ENCODE measurements at regions of chr10 and their contacts with region 1.

Region 1: DNA sequence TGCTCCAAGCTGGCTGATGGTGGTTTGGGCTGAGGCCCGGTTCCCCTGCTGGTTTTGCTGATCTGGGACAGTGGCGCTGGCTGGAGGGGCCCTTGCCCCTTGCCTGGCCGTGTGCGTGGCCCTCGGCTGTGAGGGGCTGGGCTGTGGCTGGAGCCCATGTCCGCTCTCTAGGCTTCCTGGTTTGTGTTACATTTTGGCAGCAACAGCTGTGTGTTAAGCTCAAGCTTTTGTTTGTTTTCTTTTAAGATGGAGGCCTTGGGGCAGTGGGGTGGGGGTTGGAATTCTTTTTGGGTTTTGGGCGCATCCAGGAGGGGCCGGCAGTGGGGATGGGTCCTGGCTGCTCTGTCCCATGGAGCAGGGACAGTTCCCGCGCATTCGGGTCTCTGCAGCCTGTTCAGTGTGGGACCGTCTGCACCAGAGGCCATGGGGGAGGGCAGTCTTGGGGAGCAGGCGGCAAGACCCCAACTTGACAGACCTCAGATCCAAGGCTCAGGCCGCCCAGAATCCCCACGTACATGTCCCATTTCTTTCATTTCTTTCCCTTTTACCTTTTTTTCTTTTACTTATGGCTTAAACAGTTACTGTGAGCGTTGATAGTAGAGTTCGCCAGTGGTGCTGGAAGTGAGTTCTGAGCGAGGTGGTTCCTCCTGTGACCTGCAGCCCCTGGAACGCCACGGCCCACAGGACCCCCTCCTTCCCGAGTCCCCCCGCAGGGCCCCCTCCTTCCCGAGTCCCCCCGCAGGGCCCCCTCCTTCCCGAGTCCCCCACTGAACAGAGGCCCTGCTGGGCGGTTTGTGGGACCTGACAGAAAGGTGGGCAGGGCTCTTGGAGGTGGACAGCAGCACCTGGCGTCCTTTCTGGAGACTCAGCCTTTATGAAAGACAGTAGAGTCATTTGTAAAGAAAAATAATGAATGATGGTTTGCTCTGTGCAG is 75.3 kb downstream of the INPP5A start:
- DNase-seq: peak; percentile 68

Region 2: DNA sequence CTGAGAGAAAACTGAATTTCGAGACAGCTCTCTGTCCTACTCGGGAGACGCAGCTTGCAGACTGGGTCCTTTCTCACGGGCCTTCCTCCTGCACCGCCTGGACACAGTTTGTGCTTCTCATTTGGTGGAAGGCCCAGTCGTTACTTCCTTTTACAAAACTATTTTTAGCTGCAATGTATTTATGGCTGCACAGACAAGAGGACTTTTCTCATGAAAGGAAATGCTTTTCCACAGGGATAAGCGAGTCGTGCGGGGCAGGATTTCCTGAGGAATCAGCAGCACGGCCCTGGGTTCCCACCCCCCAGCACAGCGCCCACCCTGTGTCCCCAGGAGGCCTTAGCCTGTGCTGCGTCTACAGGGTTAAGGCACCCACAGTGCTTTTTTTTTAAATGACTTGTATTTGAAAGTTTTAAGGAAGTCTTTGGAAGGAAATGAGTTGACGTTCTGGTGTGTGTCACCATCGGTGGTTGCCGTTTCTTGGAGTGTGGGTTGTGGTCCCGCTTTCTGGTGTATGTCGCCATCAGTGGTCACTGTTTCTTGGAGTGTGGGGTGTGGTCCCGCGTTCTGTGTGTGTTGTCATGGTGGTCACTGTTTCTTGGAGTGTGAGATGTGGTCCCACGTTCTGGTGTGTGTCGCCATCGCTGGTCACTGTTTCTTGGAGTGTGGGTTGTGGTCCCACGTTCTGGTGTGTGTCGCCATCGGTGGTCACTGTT is 24.4 kb before region 1 on chr10:
- intact Hi-C with region 1: loop called in 1 of 2 experiments (anchors 1 kb)
- DNase-seq: no peak

Region 3: DNA sequence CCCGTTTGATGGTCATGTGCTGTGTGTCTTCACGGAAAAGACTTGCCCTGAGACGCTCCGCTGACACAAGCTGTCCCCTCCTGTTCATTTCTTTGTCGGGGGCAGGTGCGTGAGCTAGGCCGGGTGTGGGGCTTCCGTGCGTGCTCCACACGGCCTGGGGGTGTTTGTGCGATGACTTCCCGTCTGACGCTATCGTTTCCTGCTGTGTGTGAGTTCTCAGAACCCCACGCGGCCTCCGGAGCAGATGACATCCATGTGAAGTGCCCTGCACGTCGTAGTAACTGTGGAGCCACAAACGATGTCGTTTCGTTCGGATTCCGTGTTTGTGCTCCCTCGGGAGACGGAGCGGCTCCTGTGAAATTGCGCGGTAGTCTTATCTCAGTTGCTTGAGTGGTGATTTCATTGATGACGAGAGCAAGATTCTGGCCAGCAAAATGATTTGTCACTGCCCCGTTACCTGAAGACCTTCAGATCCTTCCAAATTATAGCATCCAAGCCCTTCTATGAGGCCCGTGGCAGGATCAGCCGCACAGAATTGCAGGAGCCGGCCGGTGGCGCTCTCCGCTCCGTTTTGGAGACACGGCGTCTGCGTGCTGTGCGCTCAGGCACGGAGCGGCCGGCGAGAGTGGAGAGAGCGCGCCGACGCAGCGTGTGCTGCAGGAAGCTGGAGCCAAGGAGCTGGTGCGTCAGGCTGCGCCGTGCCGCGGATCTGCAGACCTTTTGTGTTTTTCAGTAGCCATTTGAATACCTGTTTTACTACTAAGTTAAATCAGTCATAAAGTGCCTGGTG is 78.2 kb after region 1 on chr10:
- intact Hi-C with region 1: loop called in 1 of 2 experiments (anchors 2 kb)
- DNase-seq: peak; percentile 72

Measured in posterior vena cava (tissue), 2 donors.